Mucosa of descending colon (tissue), 3 donors: ENCODE measurements at regions of chr10 and their contacts with region 1.

Region 1: DNA sequence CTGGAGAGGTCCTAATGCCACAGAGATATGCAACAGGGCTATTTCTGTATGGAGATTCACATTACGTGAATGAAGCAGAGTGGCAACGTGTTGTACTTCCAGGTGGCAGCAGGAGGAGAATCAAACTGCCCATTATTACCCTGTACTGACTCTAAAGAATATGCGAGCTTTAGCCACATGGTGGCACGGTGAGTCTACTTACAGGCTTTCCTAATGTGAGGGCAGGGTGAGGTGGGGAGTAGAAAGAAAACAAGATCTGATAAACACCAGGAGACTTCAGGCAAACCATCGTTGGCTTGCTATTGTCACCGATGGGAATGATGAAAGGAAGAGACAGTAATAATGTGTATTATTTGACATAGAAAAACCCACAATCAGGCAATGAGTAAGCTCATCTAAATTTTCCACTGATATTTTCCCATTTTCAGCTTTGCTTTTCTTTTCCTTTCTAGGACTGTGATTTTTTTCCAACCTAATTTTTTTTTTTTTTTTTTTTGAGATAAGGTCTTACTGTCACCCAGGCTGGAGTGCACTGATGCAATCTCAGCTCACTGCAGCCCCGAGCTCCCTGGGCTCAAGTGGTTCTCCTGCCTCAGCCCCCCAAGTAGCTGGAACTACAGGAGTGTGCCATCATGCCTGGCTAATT is 164.3 kb downstream of the BTAF1 start:
- DNase-seq: peak in 2 of 3 donors; percentile 51 to 87
- ATAC-seq: peak; percentile 98
- H3K4me3 ChIP-seq: no peak overlapping the region
- H3K4me1 ChIP-seq: no peaks in the 10 kb centered on the region
- CTCF ChIP-seq: peak; percentile 34

Region 2: DNA sequence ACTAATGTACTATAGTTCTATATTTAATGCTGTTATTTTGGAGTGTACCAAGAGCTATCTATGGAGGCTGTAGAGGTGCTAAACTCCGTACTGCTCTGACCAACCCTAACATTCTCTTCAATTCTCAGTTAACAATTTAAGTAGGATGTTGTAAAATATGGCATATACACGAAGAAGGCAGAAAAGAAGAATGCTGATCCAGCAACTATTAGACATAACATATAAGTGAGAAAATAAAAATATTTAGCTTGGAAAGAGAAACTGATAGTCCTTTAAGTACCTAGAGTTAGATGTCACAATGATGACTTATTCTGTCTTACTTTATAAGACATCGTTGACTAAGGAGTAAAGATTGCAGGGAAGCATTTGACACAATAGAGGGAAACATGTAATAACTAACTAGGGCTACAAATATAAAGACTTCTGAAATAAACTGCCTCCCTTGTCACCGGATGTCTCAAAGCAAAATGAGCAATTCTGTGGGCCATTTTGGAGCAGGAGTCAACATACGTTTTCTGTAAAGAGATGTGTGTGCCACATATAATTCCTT is 43.5 kb after region 1 on chr10:
- intact Hi-C with region 1: no loop called
- DNase-seq: no peak
- ATAC-seq: no peak
- H3K4me3 ChIP-seq: no peak overlapping the region
- H3K4me1 ChIP-seq: no peaks in the 10 kb centered on the region
- CTCF ChIP-seq: no peak

Region 3: GRCh38 chr10:92432596-92432995 is 344.7 kb after region 1 on chr10:
- intact Hi-C with region 1: loop called (anchors 5 to 10 kb)
- DNase-seq: no peak
- ATAC-seq: no peak
- H3K4me3 ChIP-seq: no peak overlapping the region
- H3K4me1 ChIP-seq: no peaks in the 10 kb centered on the region
- CTCF ChIP-seq: no peak